AG04450 (cell line): ENCODE measurements at regions of chr2 and their contacts with region 1.

Region 1: DNA sequence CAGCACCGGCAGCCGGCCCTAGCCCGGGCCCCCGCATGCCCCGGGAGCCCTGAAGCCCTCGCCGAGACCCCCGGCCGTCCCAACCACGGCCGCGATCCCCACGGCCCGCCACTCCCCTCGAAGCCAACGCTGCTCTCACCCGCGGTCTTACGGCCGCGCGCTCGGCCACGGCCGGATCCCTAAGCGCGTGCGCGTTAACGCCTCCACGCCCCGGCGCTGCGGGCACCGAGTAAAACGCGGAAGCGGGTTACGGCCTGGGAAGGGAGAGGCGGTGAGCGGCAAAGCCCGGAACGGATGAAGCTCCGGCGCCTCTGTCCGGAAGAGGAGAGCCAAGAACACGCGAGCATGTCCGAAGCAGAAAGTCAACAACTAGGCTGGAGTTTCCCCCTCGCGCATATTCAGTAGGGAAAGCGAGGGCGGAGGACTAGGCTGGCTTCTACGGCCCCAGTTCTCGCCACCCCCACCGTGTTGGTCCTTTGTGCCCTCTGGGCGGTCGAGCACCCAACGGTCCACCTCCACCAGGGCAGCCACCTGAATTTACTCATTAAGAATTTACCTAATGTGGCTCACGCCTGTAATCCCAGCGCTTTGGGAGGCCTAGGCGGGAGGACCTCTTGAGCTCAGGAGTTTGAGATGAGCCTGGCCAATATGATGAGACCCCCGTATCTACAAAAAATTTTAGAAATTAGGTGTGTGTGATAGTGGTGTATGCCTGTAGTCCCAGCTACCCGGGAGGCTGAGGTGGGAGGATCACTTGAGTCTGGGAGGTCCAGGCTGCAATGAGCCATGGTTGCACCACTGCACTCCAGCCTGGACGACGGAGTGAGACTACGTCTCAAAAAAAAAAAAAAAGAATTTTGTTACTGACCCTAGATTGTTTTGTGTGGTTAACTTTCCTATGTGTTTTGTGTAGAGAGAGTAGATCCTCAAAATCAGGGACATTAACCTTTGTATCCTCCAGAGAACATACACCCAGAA is at the start of gene KANSL3:
- DNase-seq: peak; percentile 87
- H3K4me3 ChIP-seq: peak within 1 kb of the TSS; percentile 80
- H3K27ac ChIP-seq: peak within 1 kb of the TSS; percentile 85
- H3K27me3 ChIP-seq: no peaks in the 10 kb centered on the region
- CTCF ChIP-seq: no peak
- polyA plus RNA-seq, gene KANSL3: 17.1 and 22.7 TPM in 2 replicates

Region 2: GRCh38 chr2:96665083-96665569 is 26.7 kb after region 1 on chr2:
- CTCF ChIA-PET with region 1: interaction called, 3 read pairs
- POLR2A ChIA-PET with region 1: interaction called, 21 read pairs
- DNase-seq: peak; percentile 95
- H3K4me3 ChIP-seq: no peak overlapping the region
- H3K27ac ChIP-seq: peak overlapping the region; percentile 93
- H3K27me3 ChIP-seq: no peaks in the 10 kb centered on the region
- CTCF ChIP-seq: no peak